GM10248 (cell line): ENCODE measurements at regions of chr6 and their contacts with region 1.

Region 1: DNA sequence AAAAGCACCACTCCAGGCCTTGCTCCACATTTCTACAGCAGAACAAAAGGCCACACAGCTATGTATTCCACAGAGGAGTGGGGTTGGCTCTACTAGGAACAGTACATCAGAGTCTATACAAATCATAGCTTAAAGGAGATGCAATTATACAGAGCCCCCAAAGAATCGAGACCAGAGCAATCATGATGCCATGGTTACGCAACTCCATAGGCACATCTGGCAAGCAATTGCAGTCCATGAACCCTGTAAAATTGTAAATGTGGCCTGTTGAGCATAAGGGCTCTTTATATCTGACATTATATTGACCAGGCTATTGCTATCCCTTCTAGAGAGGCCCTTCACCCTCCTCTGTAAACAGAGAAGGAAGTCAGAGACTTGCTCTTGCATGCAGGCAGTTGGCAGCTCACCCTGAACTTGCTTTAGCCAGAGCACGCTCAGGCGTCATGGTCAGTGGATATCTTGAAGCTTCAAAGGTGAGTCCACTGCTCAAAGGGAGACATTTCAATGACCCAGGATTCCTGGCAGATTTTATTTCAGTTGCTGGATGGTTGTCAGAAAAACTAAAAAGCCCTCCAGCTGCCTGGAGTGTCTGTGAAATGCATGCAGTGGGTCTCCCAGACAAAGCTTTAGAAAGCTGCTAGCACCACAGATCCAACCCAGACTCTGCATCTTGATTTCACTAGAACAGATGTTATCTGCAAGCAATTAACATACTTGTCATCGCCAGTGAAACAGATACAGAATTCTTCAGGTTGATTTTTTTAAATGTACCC is 357.2 kb downstream of the CENPW start:
- DNase-seq: no peak
- CTCF ChIP-seq: no peak

Region 2: DNA sequence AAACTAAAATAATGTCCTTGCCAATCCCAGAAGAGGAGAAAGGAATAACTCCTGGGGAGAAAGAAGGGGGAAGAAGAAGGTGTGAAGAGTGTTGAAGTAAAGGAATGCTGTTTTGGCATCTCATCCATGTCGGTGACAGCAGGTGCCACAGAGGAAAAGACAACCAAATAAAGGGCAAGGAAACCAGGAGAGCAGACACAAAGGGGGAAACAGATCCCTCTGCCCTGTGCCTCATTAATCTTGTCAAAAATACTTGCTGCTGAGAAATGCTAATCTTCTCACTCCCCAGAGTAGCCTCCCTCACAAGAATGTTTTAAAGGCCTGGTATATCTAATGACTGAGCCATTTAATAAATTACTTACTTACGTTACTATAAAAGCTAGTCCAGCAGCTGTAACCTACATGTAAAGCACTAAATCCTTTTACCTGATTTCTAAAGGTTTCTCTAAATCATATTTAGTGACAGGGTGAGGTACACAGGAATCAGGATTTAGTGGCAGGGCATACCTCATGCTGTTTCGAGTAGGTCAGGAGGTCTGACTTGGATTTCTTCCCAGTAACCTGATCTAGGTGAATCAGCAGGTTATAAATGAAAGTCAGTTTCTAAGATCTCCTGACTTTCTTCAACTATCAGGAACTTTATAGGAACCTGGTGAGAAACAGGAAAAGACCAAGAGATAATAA is 19.9 kb after region 1 on chr6:
- CTCF ChIA-PET with region 1: interaction called, 24 read pairs
- POLR2A ChIA-PET with region 1: no interaction called
- DNase-seq: no peak
- CTCF ChIP-seq: no peak

Region 3: DNA sequence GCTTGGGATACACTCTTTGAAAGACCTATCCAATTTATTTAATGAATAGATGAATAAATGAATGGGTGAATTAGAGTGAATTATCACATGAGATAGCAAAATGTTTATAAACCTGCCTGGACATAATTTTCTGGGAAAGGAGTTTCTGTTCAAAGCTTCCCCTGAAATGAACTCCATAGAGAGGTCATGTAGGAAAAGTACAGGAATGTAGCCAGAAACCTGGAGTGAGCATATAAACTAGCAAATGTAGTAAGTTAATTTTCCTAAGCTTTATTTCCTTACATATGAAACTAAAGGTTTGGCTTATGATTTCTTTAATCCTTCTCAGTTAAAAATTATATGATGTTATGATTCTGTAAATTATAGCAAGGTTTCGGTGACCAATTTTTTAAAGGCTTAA is 41.0 kb after region 1 on chr6:
- CTCF ChIA-PET with region 1: no interaction called
- POLR2A ChIA-PET with region 1: no interaction called
- DNase-seq: no peak
- CTCF ChIP-seq: no peak